IMR-90 (cell line): ENCODE measurements at regions of chr3 and their contacts with region 1.

Region 1: DNA sequence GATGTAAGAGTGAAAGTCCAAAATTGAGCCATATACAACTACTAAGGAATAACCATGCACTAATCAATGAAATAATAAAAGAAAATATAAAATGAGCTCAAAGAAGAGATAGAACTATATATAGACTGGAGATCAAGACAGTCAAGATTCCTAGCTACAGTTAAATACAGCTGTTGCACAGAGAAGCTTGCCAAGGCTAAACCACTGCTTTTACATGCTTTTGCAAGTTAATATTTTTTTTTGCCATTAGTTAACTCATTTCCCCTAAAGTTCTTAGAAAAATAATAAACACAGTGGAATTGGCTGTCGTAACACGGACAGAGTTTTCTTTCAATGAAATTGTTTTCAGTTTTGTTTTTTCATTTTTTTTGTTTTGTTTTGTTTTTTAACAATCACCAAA is 123.0 kb downstream of the VGLL3 start:
- DNase-seq: peak; percentile 77
- ATAC-seq: peak; percentile 61
- H3K4me3 ChIP-seq: no peak overlapping the region
- H3K27ac ChIP-seq: no peak overlapping the region
- H3K4me1 ChIP-seq: no peaks in the 10 kb centered on the region
- H3K27me3 ChIP-seq: no peaks in the 10 kb centered on the region
- CTCF ChIP-seq: no peak
- POLR2A ChIP-seq: no peak
- RAD21 ChIP-seq: no peak

Region 2: GRCh38 chr3:86605166-86605565 is 262.8 kb before region 1 on chr3:
- CTCF ChIA-PET with region 1: no interaction called
- POLR2A ChIA-PET with region 1: no interaction called
- dilution Hi-C with region 1: no loop called
- in situ Hi-C with region 1: no loop called
- intact Hi-C with region 1: no loop called
- DNase-seq: no peak
- ATAC-seq: no peak
- H3K4me3 ChIP-seq: no peak overlapping the region
- H3K27ac ChIP-seq: no peak overlapping the region
- H3K4me1 ChIP-seq: no peaks in the 10 kb centered on the region
- H3K27me3 ChIP-seq: no peaks in the 10 kb centered on the region
- CTCF ChIP-seq: no peak
- POLR2A ChIP-seq: no peak
- RAD21 ChIP-seq: no peak

Region 3: GRCh38 chr3:86837871-86838270 is 30.1 kb before region 1 on chr3:
- CTCF ChIA-PET with region 1: no interaction called
- POLR2A ChIA-PET with region 1: interaction called, 15 read pairs
- dilution Hi-C with region 1: no loop called
- in situ Hi-C with region 1: no loop called
- intact Hi-C with region 1: no loop called
- DNase-seq: peak; percentile 27
- ATAC-seq: no peak
- H3K4me3 ChIP-seq: no peak overlapping the region
- H3K27ac ChIP-seq: no peak overlapping the region
- H3K4me1 ChIP-seq: no peaks in the 10 kb centered on the region
- H3K27me3 ChIP-seq: no peaks in the 10 kb centered on the region
- CTCF ChIP-seq: no peak
- POLR2A ChIP-seq: no peak
- RAD21 ChIP-seq: no peak

Region 4: DNA sequence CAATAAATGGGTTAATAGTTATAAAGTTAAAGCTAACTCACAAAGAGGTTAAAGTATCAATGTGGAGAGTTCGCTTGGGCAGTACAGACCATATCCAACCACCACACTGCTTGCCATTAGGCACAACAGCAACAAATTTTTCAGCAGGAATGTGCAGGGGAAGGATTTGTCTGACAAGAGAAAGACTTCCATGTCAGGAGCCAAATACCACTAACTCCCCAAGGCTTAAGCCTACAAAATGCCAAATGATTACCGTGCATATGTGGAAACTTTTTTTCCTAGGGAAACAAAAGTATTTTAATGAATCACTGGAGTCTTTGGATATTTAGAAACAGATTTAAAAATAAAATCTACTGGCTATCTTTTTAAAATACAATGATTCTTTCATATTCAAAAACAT is 114.9 kb after region 1 on chr3:
- CTCF ChIA-PET with region 1: no interaction called
- POLR2A ChIA-PET with region 1: no interaction called
- dilution Hi-C with region 1: no loop called
- in situ Hi-C with region 1: no loop called
- intact Hi-C with region 1: loop called (anchors 5 kb)
- DNase-seq: peak; percentile 68
- ATAC-seq: peak; percentile 42
- H3K4me3 ChIP-seq: no peak overlapping the region
- H3K27ac ChIP-seq: peak overlapping the region; percentile 45; the same call in 1 of the 2 replicates
- H3K4me1 ChIP-seq: peaks cover 15% of the 10 kb centered on the region
- H3K27me3 ChIP-seq: no peaks in the 10 kb centered on the region
- CTCF ChIP-seq: no peak
- POLR2A ChIP-seq: no peak
- RAD21 ChIP-seq: no peak